HEK293 (cell line): ENCODE measurements at regions of chr15 and their contacts with region 1.

Region 1: GRCh38 chr15:91032919-91033803 is 10.8 kb upstream of the VPS33B start:
- H3K4me3 ChIP-seq: no peak overlapping the region
- H3K27ac ChIP-seq: no peak overlapping the region
- H3K4me1 ChIP-seq: no peaks in the 10 kb centered on the region
- CTCF ChIP-seq: peak; percentile 96

Region 2: DNA sequence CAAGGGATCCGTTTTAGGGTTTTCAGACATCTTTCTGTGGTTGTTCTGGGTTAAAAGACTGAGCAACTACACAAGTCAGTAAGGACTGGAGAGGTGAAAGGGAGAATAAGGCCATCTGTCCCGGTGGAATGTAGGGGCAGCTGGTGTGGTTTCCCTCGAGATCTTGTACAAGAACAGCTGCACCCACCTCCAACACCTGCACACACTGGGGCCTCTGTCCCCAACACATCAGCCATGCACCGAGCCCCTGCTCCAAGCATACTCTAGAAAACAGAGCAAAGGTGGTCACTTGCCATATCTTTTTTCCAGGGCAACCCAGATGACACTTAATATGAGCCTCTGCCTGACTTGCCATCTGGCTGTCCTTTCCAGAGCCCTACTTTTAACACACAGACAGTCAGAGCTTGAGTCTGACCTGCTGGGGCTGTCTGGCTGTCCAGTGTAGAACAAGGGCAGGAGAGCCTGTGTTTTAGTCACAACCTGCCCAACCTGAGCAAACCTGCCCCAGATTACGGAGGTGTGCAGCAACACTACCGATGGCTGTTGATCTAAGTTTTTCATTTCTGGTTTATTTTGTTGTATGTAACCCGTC is 117.8 kb before region 1 on chr15:
- CTCF ChIA-PET with region 1: no interaction called
- POLR2A ChIA-PET with region 1: no interaction called
- H3K4me3 ChIP-seq: no peak overlapping the region
- H3K27ac ChIP-seq: no peak overlapping the region
- H3K4me1 ChIP-seq: no peaks in the 10 kb centered on the region
- CTCF ChIP-seq: no peak

Region 3: DNA sequence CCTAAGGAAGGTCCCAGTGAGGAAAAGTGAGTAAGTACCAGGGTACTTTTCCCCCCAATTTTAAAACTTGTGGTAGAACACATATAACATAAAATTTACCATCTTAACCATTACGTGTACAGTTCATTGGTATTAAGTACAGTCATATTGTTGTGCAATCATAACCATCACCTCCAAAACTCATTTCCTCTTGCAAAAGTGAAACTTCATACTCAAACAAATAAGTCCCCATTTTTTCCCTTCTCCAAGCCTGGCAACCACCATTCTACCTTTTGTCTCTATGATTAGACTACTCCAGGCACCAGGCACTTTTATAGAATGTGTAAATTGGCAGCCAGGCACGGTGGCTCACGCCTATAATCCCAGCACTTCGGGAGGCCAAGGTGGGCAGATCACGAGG is 51.0 kb before region 1 on chr15:
- CTCF ChIA-PET with region 1: interaction called, 17 read pairs
- POLR2A ChIA-PET with region 1: no interaction called
- H3K4me3 ChIP-seq: no peak overlapping the region
- H3K27ac ChIP-seq: no peak overlapping the region
- H3K4me1 ChIP-seq: peaks cover 4% of the 10 kb centered on the region
- CTCF ChIP-seq: no peak

Region 4: DNA sequence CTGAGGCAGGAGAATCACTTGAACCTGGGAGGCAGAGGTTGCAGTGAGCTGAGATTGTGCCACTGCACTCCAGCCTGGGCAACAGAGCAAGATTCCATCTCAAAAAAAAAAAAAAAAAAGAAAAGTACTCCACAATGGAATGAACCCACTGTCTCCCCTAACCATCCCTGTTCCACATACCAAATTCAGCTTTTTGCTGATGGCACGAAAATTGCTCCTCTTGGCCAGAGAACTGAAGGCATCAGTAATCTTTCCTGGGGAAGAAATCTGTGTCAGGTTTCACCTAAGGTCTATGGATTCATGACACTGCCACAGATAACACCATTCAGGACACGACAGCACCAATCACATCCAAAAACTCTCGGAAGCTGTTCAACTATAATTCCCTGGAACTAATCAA is 32.0 kb before region 1 on chr15:
- CTCF ChIA-PET with region 1: interaction called, 15 read pairs
- POLR2A ChIA-PET with region 1: no interaction called
- H3K4me3 ChIP-seq: no peak overlapping the region
- H3K27ac ChIP-seq: no peak overlapping the region
- H3K4me1 ChIP-seq: no peaks in the 10 kb centered on the region
- CTCF ChIP-seq: no peak

Region 5: GRCh38 chr15:91022075-91022835 is 10.9 kb before region 1 on chr15 and contains the start of gene VPS33B:
- CTCF ChIA-PET with region 1: interaction called, 22 read pairs
- POLR2A ChIA-PET with region 1: interaction called, 9 read pairs
- H3K4me3 ChIP-seq: peak within 1 kb of the TSS; percentile 74
- H3K27ac ChIP-seq: peak within 1 kb of the TSS; percentile 61
- H3K4me1 ChIP-seq: peaks cover 6% of the 10 kb centered on the region; the same call in 1 of the 2 replicates
- CTCF ChIP-seq: peak; percentile 47; the same call in 1 of the 2 replicates

Region 6: DNA sequence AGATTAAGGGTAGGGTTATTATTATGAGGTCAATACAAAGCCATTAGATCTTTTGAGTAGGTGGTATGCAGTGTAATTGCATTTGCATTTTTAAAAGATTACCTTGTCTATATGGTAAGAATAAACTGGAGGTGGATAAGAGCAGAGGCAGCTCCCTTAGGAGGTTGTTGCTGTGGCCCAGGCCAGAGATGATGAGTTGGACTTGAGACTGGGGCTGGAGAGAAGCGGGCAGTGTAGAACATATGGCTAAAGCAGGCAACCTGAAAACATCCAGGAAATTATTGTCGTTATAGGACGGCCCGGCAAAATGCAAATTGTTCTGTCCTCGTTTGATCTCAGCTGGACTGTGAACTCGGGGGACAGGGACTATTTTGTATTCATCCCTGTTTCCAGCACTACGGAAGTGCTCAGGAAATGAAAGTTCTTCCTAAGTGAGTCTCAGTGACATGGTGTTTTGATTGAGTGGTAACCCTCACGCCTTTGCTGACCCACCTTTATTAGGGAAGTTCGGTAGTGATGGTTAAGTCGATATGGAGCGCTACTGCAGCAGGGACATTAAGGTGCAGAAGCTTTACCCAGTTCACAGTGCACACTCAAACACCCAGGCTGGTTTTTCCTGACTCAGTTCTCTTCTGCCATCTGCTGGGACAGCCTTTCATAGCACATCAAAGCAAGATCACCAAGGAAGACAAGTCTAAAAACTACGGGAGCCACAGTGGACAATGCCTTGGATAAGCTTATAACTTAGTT is 16.4 kb after region 1 on chr15:
- CTCF ChIA-PET with region 1: interaction called, 17 read pairs
- POLR2A ChIA-PET with region 1: no interaction called
- H3K4me3 ChIP-seq: no peak overlapping the region
- H3K27ac ChIP-seq: no peak overlapping the region
- H3K4me1 ChIP-seq: no peaks in the 10 kb centered on the region
- CTCF ChIP-seq: peak; percentile 69

Region 7: DNA sequence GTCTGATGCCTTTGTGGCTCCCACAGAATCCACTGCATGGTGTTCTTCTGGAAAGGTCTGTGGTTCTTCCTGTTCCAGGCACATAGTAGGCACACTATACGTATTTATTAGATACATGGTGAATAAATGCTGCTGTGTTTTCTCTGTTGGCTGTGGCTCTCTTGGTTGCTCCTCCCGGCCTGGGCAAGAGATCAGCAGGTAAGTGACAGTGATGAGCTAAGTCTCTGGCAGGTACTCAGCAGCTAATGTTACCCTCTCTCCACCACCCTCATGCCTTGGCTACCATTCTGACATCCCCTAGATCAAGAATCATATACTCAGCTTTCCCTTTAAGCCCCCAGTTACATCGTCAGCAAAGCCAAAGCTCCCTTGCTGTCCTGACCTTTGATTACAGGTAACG is 75.3 kb after region 1 on chr15:
- CTCF ChIA-PET with region 1: no interaction called
- POLR2A ChIA-PET with region 1: no interaction called
- H3K4me3 ChIP-seq: no peak overlapping the region
- H3K27ac ChIP-seq: no peak overlapping the region
- H3K4me1 ChIP-seq: no peaks in the 10 kb centered on the region
- CTCF ChIP-seq: no peak